ENCODE measurements at regions of chr12 and their contacts with region 1.

Region 1: DNA sequence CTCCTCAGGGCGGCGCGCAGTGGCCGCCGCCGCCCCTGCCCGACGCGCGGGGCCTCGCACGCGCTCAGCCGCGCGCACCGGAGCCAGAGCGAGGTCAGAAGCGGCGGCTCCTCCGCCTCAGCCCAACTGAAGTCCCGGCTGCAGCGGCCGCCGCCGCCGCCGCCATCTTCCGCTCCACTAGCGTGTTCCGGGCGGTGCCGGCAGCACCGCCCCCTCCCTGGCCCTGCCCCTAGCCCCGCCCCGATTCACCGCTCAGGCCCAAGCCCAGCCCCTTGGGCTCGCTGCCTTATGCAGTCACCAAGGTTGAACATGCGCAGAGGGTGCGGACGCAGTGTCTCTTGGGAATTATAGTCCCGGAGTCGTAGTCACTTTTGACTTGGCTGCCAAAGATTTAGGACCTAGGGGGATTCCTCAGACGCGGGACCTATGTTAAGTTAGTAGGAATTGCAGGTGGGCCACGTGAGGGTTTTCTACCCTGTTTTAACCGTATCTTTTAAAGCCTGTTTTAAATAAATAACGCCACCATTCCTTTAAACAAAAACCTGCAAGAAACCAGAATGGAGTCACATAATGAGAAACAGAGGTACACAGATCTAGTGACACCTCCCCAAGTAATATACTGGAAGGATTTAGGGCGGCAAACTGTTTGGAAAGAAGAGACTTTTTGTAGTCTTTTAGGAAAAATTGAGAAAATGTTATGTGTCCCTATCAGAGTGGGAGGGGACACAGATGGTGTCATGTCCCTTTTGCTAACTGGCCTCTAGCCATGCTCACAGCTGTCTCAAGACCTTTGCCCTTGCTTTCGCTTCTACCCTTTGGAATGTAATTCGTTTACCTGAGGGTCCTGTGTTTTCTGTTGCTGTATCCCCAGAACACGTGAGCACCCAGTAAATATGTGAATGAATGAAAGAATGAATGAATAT is at the start of gene PPTC7:
- DNase-seq: peak; percentile 97 to 99 (median 98)
- ATAC-seq: peak; percentile 94 to 99 (median 98)
- H3K4me3 ChIP-seq: peak within 1 kb of the TSS; percentile 71 to 99 (median 94)
- H3K27ac ChIP-seq: peak within 1 kb of the TSS; percentile 88 to 98 (median 96)
- H3K4me1 ChIP-seq: peaks cover 4 to 66% (median 45%) of the 10 kb centered on the region in 12 donors
- H3K27me3 ChIP-seq: no peaks in the 10 kb centered on the region
- CTCF ChIP-seq: no peak
- POLR2A ChIP-seq: peak in 1 of 2 donors; percentile 91
- total RNA-seq, gene PPTC7: 47.5 to 113 (median 72.7) TPM

Region 2: DNA sequence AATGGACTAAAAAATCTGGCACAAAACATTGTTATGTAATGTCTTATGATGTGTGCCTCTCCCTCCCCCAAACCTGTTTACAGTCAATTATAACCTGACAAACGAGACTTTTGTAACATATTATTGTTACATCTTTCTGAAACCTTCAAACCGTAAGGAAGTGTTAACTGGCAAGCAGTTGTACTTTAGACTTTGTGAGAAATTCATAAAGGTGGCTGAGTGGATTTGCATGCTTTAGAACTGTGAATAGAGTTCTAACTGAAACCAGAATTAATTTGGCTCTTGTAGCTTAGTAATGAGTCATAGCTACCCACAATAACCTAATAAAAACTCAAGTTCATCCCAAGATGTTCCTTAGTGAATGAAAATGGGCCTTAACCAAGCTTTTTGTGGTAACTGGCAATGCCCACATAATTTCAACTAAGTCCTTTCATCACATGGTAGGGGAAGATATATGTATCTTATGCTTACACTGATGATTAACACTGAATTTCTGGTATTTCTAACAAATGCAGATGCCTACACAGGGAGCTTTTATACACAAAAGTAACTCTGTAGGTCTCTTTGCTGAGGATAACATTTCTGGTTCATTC is 51.6 kb before region 1 on chr12:
- intact Hi-C with region 1: loop called in 4 of 10 experiments (anchors 5 to 10 kb)
- DNase-seq: no peak
- ATAC-seq: peak in 2 of 4 donors; percentile 12 to 24
- H3K4me3 ChIP-seq: no peak overlapping the region
- H3K27ac ChIP-seq: peak overlapping the region in 5 of 12 donors; percentile 5 to 69 (median 35)
- H3K4me1 ChIP-seq: peaks cover 0 to 65% (median 15%) of the 10 kb centered on the region in 12 donors
- H3K27me3 ChIP-seq: no peaks in the 10 kb centered on the region
- CTCF ChIP-seq: no peak
- POLR2A ChIP-seq: no peak

Region 3: DNA sequence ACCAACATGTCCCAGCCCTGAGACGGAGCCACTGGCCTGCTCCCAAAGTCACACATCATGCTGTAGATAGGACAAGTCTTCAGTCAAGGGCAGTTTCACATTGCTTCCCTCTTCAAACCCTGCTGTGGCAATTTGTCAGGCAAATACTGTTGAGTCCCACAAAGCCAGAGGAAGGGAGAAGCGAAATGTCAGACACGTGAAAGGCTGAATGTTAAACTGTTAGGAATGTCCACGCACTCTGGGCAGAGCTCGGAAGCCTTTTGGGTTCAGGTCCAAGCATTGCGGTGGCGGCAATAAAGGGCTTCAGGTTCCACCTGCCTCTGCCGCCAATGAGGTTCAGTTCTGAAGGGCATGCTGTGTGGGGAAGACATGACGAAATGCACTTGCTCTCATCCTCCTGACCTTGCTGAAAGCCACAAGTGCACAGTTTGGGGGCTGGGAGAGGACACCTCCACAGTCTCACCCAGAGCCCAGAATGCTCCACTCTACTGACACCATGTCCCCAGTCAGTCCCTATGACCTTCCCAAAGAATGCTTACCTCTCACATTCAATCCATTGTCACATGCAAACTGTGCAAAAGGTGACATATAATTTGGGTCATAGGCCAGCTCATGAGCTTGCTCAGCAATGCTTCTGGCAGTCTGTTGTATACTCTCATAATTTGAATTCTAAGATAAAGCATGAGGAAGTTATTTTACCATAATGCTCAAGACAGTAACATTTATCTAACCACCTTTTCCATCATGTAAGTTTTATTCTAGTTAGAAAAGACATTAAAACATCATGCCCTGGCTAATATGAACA is 45.6 kb before region 1 on chr12:
- intact Hi-C with region 1: loop called in 7 of 10 experiments (anchors 5 to 10 kb)
- DNase-seq: peak; percentile 51 to 86 (median 69)
- ATAC-seq: peak; percentile 83 to 92 (median 85)
- H3K4me3 ChIP-seq: no peak overlapping the region
- H3K27ac ChIP-seq: peak overlapping the region; percentile 68 to 95 (median 84)
- H3K4me1 ChIP-seq: peaks cover 3 to 77% (median 24%) of the 10 kb centered on the region in 12 donors
- H3K27me3 ChIP-seq: no peaks in the 10 kb centered on the region
- CTCF ChIP-seq: no peak
- POLR2A ChIP-seq: no peak

Region 4: GRCh38 chr12:110543252-110543959 is 40.0 kb before region 1 on chr12:
- intact Hi-C with region 1: loop called in 9 of 10 experiments (anchors 5 to 10 kb)
- DNase-seq: peak; percentile 77 to 92 (median 84)
- ATAC-seq: peak; percentile 82 to 94 (median 88)
- H3K4me3 ChIP-seq: peak overlapping the region in 1 of 12 donors; percentile 9
- H3K27ac ChIP-seq: peak overlapping the region; percentile 40 to 91 (median 79)
- H3K4me1 ChIP-seq: peaks cover 13 to 63% (median 38%) of the 10 kb centered on the region in 12 donors
- H3K27me3 ChIP-seq: no peaks in the 10 kb centered on the region
- CTCF ChIP-seq: no peak
- POLR2A ChIP-seq: peak in 1 of 2 donors; percentile 34

Region 5: GRCh38 chr12:110677206-110677911 is 94.0 kb after region 1 on chr12:
- intact Hi-C with region 1: no loop called
- DNase-seq: peak in 3 of 5 donors; percentile 39 to 59 (median 50)
- ATAC-seq: peak; percentile 49 to 79 (median 60)
- H3K4me3 ChIP-seq: peak overlapping the region in 2 of 12 donors; percentile 5 to 13
- H3K27ac ChIP-seq: peak overlapping the region; percentile 31 to 82 (median 53)
- H3K4me1 ChIP-seq: peaks cover 0 to 40% (median 19%) of the 10 kb centered on the region in 12 donors
- H3K27me3 ChIP-seq: no peaks in the 10 kb centered on the region
- CTCF ChIP-seq: no peak
- POLR2A ChIP-seq: no peak

Region 6: DNA sequence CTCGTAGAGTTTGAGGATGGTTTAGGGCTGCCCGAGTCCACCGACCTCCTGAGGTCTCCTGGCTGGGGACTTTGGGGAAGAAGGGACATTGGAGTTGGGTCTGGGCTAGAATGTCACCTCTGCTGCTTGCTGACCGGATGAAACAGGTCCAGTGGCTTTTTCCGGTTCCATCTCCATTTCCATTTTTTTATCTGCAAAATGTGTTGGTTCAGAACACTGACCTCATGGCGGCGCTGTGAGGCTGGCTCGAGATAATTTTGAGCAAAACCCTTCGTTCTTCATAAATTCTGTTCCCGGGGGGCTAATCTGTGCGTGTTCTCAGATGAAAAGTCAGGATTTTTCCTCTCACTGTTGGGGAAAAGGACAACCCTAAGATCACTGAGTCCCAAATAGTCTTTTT is 348.6 kb after region 1 on chr12:
- intact Hi-C with region 1: no loop called
- DNase-seq: no peak
- ATAC-seq: no peak
- H3K4me3 ChIP-seq: peak overlapping the region in 7 of 12 donors; percentile 11 to 44 (median 21)
- H3K27ac ChIP-seq: peak overlapping the region; percentile 7 to 95 (median 78)
- H3K4me1 ChIP-seq: peaks cover 0 to 31% (median 6%) of the 10 kb centered on the region in 12 donors
- H3K27me3 ChIP-seq: peaks cover 0 to 14% (median 4%) of the 10 kb centered on the region in 9 donors
- CTCF ChIP-seq: peak in 7 of 12 donors; percentile 14 to 41 (median 28)
- POLR2A ChIP-seq: no peak

Measured in heart left ventricle (tissue), 16 donors.